ENCODE measurements at regions of chr11 and their contacts with region 1.

Region 1: DNA sequence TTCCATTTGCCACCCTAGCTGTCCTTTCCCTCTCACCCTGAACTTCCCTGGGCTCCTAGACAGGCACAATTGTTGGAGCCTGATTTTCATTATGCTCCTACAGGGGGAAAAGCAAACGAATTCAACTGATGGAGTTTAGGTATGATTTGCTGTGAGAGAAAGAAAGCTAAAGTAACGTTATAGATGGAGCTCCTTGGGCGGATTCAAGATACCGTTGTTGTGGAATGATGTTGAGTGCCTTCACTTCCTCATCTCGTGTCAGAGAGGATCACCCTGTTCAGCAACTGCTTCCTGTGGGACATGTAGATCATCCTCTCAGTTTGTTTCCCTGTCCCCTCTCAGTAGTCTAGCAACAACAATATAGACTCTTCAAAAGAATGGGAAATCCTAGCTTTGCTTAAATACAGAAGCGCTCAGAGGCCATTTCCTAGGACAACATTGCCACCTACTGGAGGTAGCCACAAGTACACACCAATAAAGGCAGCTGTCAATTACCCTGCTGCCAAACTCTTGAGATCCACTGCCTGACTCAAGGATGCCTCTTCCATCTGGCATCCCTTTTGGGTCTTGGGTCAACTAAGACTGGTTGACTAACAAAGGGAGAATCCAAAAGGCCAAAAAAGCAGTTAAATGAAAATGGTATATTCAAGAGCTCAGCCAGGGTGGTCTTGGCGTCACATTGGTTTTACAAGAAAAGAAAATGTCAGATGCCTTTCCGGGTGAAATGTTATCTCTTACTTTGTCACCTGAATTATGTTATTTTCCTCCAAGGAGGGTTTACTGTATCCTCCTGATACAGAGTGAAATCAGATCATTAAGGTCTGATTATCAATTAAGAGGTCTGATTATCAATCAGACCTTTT is 13.5 kb upstream of the DTX4 start:
- DNase-seq: peak; percentile 75
- ATAC-seq: peak; percentile 97
- H3K4me3 ChIP-seq: no peak overlapping the region
- H3K27ac ChIP-seq: no peak overlapping the region
- H3K4me1 ChIP-seq: no peaks in the 10 kb centered on the region
- H3K27me3 ChIP-seq: peaks cover 7% of the 10 kb centered on the region
- CTCF ChIP-seq: peak; percentile 92
- POLR2A ChIP-seq: no peak
- RAD21 ChIP-seq: peak; percentile 89

Region 2: GRCh38 chr11:58654079-58654907 is 504.1 kb before region 1 on chr11:
- CTCF ChIA-PET with region 1: no interaction called
- POLR2A ChIA-PET with region 1: no interaction called
- dilution Hi-C with region 1: no loop called
- in situ Hi-C with region 1: no loop called
- intact Hi-C with region 1: loop called (anchors 5 kb)
- DNase-seq: peak; percentile 72
- ATAC-seq: peak; percentile 98
- H3K4me3 ChIP-seq: no peak overlapping the region
- H3K27ac ChIP-seq: no peak overlapping the region
- H3K4me1 ChIP-seq: 0 out of 2 replicates have a peak, but pooled peaks cover 2% of the 10 kb centered on the region
- H3K27me3 ChIP-seq: no peaks in the 10 kb centered on the region
- CTCF ChIP-seq: peak; percentile 89
- POLR2A ChIP-seq: no peak
- RAD21 ChIP-seq: peak; percentile 72

Region 3: GRCh38 chr11:58845366-58845765 is 313.1 kb before region 1 on chr11:
- CTCF ChIA-PET with region 1: interaction called, 8 read pairs
- POLR2A ChIA-PET with region 1: no interaction called
- dilution Hi-C with region 1: no loop called
- in situ Hi-C with region 1: no loop called
- intact Hi-C with region 1: loop called (anchors 2 kb)
- DNase-seq: no peak
- ATAC-seq: no peak
- H3K4me3 ChIP-seq: no peak overlapping the region
- H3K27ac ChIP-seq: no peak overlapping the region
- H3K4me1 ChIP-seq: no peaks in the 10 kb centered on the region
- H3K27me3 ChIP-seq: no peaks in the 10 kb centered on the region
- CTCF ChIP-seq: no peak
- POLR2A ChIP-seq: no peak
- RAD21 ChIP-seq: no peak

Region 4: DNA sequence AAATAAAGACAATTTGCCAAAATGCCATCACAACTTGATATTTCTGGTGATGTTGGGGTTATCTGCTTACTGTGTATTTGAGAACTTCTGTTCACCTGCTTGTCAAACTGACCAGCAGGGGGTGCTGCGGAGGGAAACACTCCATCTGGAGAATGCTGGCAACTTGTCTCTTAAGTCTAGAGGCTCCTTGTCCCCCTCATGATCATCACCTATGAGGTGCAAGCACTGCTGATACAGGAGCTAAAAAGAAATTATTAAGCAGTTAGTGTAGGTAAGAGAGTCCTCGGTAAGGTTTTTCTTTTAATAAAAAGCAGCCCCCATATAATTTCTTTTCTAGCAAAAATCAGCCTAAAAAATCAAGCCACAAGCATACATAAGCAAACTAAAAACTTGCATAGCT is 105.0 kb before region 1 on chr11:
- CTCF ChIA-PET with region 1: interaction called, 5 read pairs
- POLR2A ChIA-PET with region 1: no interaction called
- dilution Hi-C with region 1: no loop called
- in situ Hi-C with region 1: no loop called
- intact Hi-C with region 1: loop called (anchors 1 kb)
- DNase-seq: peak; percentile 49
- ATAC-seq: peak; percentile 69
- H3K4me3 ChIP-seq: no peak overlapping the region
- H3K27ac ChIP-seq: no peak overlapping the region
- H3K4me1 ChIP-seq: no peaks in the 10 kb centered on the region
- H3K27me3 ChIP-seq: no peaks in the 10 kb centered on the region; the same call in 1 of the 2 replicates
- CTCF ChIP-seq: peak; percentile 53
- POLR2A ChIP-seq: no peak
- RAD21 ChIP-seq: peak; percentile 29; the same call in 1 of the 2 replicates

Region 5: GRCh38 chr11:59142530-59143507 is 15.6 kb before region 1 on chr11 and contains the start of gene FAM111A:
- CTCF ChIA-PET with region 1: interaction called, 14 read pairs
- POLR2A ChIA-PET with region 1: interaction called, 3 read pairs
- dilution Hi-C with region 1: no loop called
- in situ Hi-C with region 1: no loop called
- intact Hi-C with region 1: no loop called
- DNase-seq: peak; percentile 86
- ATAC-seq: peak; percentile 90
- H3K4me3 ChIP-seq: peak within 1 kb of the TSS; percentile 82
- H3K27ac ChIP-seq: peak within 1 kb of the TSS; percentile 82
- H3K4me1 ChIP-seq: peaks cover 6% of the 10 kb centered on the region
- H3K27me3 ChIP-seq: no peaks in the 10 kb centered on the region
- CTCF ChIP-seq: peak; percentile 38
- POLR2A ChIP-seq: no peak
- RAD21 ChIP-seq: 0 out of 2 replicates have a peak, but pooled peaks have one; percentile 7
- total RNA-seq, gene FAM111A: 36.4 and 46.1 TPM in 2 replicates

Region 6: DNA sequence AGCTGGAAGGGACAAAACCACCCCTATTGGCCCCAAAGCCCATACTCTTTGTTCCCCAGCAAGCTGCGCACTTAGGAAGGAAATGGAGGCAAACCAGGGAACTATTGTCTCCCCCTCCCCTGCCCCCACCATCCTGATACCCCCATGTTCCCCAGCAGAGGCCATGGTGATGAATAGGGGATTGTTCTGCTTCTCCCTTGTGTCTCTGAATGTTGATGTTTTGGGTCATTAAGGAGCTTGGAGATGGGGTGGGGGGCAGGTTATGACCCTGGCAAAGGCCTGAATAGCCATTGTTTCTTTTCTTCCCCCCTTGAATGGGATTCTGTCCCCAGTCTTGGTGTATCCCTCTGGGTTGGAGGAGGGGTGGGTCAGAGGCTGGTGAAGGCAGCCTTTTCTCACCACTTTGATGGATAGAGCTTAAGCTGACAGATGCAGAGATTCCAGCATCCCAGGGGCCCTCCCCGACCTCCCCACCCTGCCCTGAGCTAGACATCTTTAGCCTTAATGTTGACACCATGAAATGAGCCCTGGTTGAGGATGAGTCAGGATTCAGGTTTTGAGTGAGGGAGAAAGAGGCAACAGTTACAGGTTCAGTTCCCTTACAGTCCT is 21.8 kb after region 1 on chr11:
- CTCF ChIA-PET with region 1: no interaction called
- POLR2A ChIA-PET with region 1: no interaction called
- dilution Hi-C with region 1: no loop called
- in situ Hi-C with region 1: no loop called
- intact Hi-C with region 1: no loop called
- DNase-seq: no peak
- ATAC-seq: no peak
- H3K4me3 ChIP-seq: no peak overlapping the region
- H3K27ac ChIP-seq: no peak overlapping the region
- H3K4me1 ChIP-seq: peaks cover 8% of the 10 kb centered on the region; the same call in 1 of the 2 replicates
- H3K27me3 ChIP-seq: no peaks in the 10 kb centered on the region
- CTCF ChIP-seq: no peak
- POLR2A ChIP-seq: no peak
- RAD21 ChIP-seq: no peak

Region 7: DNA sequence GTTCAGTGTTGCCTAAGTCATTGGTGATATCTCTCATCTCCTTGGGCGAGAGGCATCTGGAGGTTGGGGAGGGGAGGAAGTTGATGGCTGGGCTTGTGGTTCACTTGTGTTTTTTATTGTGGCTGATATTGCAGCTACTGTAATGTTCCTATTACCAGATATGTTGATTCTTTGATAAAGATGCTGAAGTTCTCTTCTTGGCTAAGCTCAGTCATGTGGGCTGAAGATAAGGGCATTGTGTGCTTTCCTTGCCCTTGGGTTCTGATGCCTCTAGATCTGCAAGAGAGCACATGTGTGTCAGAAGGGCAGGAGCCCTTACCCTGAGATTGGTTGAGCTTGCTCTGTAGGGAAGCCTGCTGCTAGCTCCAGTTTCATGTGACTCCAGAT is 608.8 kb after region 1 on chr11:
- CTCF ChIA-PET with region 1: no interaction called
- POLR2A ChIA-PET with region 1: no interaction called
- dilution Hi-C with region 1: no loop called
- in situ Hi-C with region 1: no loop called
- intact Hi-C with region 1: no loop called
- DNase-seq: no peak
- ATAC-seq: no peak
- H3K4me3 ChIP-seq: no peak overlapping the region
- H3K27ac ChIP-seq: no peak overlapping the region
- H3K4me1 ChIP-seq: no peaks in the 10 kb centered on the region
- H3K27me3 ChIP-seq: no peaks in the 10 kb centered on the region
- CTCF ChIP-seq: no peak
- POLR2A ChIP-seq: no peak
- RAD21 ChIP-seq: no peak